CD8-positive, alpha-beta T cell (primary cell): ENCODE measurements at regions of chr14 and their contacts with region 1.

Region 1: DNA sequence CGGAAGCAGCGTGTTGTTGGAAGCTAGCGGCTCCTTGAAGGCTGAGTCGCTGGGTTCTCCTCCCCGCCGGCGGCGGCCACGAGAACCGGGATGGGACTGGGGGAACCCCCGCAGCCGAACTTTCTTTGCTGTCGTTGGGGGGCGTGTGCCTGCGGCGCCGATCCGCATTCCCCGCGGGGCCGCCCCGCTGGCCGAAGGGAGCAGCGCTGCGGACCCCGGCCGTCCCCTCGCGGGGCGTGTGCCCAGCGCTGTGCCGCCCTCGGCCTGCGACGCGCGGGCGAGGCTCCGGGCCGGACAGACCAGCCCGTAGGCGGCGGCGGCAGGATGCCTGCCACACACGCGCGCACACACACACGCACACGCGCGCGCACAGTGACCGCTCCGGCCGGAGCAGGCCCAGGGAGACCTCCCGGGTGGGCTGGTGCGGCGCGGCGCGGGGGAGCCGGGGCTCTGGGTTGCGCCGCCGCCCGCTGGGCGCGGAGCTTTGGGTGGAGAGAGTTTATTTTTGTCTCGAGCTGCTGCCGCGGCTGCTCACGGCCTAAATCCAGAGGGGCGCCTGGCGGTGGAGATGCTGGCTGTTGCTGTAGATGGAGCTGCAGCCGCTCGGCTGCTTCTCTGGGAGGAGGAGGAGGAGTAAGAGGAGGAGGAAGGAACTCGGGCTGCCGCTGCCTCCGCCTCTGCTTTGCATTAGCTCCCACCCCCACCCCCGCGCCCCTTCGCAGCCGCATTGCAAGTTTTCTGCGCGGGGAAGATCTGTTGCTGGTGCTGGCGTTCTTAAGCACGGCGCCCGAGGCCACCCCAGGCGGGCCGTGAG is at the start of gene SAMD4A:
- DNase-seq: peak; percentile 19 to 72 (median 57)
- ATAC-seq: peak; percentile 36
- H3K4me3 ChIP-seq: peak within 1 kb of the TSS; percentile 67 to 84
- H3K4me3 Mint-ChIP-seq: peak within 1 kb of the TSS; percentile 93
- H3K27ac ChIP-seq: peak within 1 kb of the TSS in 1 of 2 experiments; percentile 12
- H3K27ac Mint-ChIP-seq: peak within 1 kb of the TSS; percentile 83
- H3K4me1 ChIP-seq: peaks cover 15% of the 10 kb centered on the region
- H3K4me1 Mint-ChIP-seq: peaks cover 21% of the 10 kb centered on the region
- H3K27me3 ChIP-seq: peaks cover 0 to 3% of the 10 kb centered on the region in 2 experiments
- H3K27me3 Mint-ChIP-seq: peaks cover 15% of the 10 kb centered on the region
- CTCF ChIP-seq: no peak
- total RNA-seq, gene SAMD4A: 1.6 to 2.0 TPM

Region 2: DNA sequence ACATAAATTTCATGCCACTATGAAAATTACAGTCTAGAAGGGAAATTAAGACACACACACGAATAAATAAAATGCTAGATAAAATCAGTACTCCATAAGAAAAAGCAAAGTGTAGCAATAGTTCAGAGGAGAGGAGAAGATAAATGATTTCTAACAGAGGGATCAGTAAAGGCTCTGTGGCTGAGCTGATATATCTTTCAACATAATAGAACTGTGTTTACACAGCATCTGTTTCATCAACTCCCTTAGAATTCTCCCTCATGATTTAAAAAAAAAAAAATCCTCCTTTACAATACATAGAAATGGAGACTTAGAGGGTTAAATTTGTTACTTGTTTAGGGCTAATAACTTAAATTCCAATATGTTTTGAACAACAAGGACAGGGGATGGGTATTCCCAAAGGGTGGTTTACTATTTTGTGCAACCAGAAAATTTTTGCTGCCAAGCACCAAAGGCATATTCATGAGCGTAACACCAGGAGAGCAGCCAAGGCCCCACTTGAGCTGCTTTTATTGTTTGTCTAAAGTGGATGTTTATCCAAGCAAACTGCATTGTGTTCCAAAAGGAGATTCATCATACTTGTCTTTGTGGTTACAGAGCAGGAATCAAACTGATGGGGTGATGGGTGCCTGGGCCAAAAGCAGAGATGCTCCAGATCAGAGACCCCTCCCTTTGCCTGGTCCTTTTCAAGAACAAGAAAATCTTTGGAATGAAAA is 772.7 kb before region 1 on chr14:
- CTCF ChIA-PET with region 1: no interaction called
- POLR2A ChIA-PET with region 1: no interaction called
- intact Hi-C with region 1: no loop called
- DNase-seq: no peak
- ATAC-seq: no peak
- H3K4me3 ChIP-seq: no peak overlapping the region
- H3K4me3 Mint-ChIP-seq: no peak overlapping the region
- H3K27ac ChIP-seq: no peak overlapping the region
- H3K27ac Mint-ChIP-seq: no peak overlapping the region
- H3K4me1 ChIP-seq: no peaks in the 10 kb centered on the region
- H3K4me1 Mint-ChIP-seq: no peaks in the 10 kb centered on the region
- H3K27me3 ChIP-seq: no peaks in the 10 kb centered on the region
- H3K27me3 Mint-ChIP-seq: no peaks in the 10 kb centered on the region
- CTCF ChIP-seq: no peak

Region 3: DNA sequence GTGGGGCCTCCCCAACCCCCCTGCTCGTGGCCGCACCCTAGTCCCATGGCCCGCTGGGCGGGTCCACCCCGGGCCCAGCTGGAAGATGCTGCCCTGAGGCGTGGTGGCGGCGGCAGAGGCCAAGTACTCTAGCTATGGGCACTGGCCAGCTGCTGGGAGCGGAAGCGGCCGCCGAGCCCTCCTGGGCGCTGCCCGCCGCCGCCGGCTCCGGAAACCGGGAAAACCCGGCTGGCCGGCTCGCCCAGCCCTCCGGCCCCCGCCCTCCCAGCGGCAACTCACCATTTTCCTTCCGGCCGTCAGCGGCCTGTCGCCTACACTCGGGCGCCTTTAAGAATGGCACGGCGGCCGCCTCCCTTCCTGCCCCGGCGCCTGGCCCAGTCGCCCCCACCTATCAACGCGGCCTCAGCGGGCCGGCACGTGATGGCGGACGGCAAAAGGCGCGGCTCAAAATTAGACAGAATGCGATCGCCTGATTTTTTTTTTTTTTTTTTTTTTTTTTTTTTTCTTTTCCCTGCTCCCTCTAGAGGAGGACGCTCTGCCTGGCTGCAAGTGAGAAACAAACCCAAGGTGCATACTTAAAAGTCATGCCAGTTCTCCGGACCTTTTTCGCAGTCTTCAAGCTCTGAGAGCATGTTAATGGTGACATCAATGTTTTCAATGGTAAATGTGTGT is 77.8 kb before region 1 on chr14 and contains the start of gene GMFB:
- CTCF ChIA-PET with region 1: interaction called, 5 read pairs
- POLR2A ChIA-PET with region 1: no interaction called
- intact Hi-C with region 1: loop called in 1 of 2 experiments (anchors 2 kb)
- DNase-seq: peak; percentile 77 to 94 (median 89)
- ATAC-seq: peak; percentile 96
- H3K4me3 ChIP-seq: peak within 1 kb of the TSS; percentile 73 to 92
- H3K4me3 Mint-ChIP-seq: peak within 1 kb of the TSS; percentile 90
- H3K27ac ChIP-seq: peak within 1 kb of the TSS; percentile 66 to 89
- H3K27ac Mint-ChIP-seq: peak within 1 kb of the TSS; percentile 94
- H3K4me1 ChIP-seq: peaks cover 38% of the 10 kb centered on the region
- H3K4me1 Mint-ChIP-seq: peaks cover 61% of the 10 kb centered on the region
- H3K27me3 ChIP-seq: no peaks in the 10 kb centered on the region
- H3K27me3 Mint-ChIP-seq: no peaks in the 10 kb centered on the region
- CTCF ChIP-seq: peak; percentile 17
- total RNA-seq, gene GMFB: 33.7 to 34.0 TPM

Region 4: GRCh38 chr14:54642801-54643697 is 76.4 kb after region 1 on chr14:
- CTCF ChIA-PET with region 1: interaction called, 22 read pairs
- POLR2A ChIA-PET with region 1: no interaction called
- intact Hi-C with region 1: loop called (anchors 1 kb)
- DNase-seq: peak in 3 of 9 experiments; percentile 8 to 52 (median 38)
- ATAC-seq: no peak
- H3K4me3 ChIP-seq: no peak overlapping the region
- H3K4me3 Mint-ChIP-seq: no peak overlapping the region
- H3K27ac ChIP-seq: no peak overlapping the region
- H3K27ac Mint-ChIP-seq: no peak overlapping the region
- H3K4me1 ChIP-seq: no peaks in the 10 kb centered on the region
- H3K4me1 Mint-ChIP-seq: no peaks in the 10 kb centered on the region
- H3K27me3 ChIP-seq: no peaks in the 10 kb centered on the region
- H3K27me3 Mint-ChIP-seq: no peaks in the 10 kb centered on the region
- CTCF ChIP-seq: no peak

Region 5: GRCh38 chr14:54773171-54773975 is 206.8 kb after region 1 on chr14:
- CTCF ChIA-PET with region 1: interaction called, 169 read pairs
- POLR2A ChIA-PET with region 1: interaction called, 9 read pairs
- intact Hi-C with region 1: loop called (anchors 1 kb)
- DNase-seq: peak; percentile 16 to 80 (median 52)
- ATAC-seq: peak; percentile 69
- H3K4me3 ChIP-seq: no peak overlapping the region
- H3K4me3 Mint-ChIP-seq: peak overlapping the region; percentile 6
- H3K27ac ChIP-seq: no peak overlapping the region
- H3K27ac Mint-ChIP-seq: no peak overlapping the region
- H3K4me1 ChIP-seq: peaks cover 24% of the 10 kb centered on the region
- H3K4me1 Mint-ChIP-seq: peaks cover 24% of the 10 kb centered on the region
- H3K27me3 ChIP-seq: peaks cover 0 to 13% of the 10 kb centered on the region in 2 experiments
- H3K27me3 Mint-ChIP-seq: peaks cover 24% of the 10 kb centered on the region
- CTCF ChIP-seq: no peak

Region 6: GRCh38 chr14:54981698-54982097 is 415.1 kb after region 1 on chr14:
- CTCF ChIA-PET with region 1: no interaction called
- POLR2A ChIA-PET with region 1: no interaction called
- intact Hi-C with region 1: loop called in 1 of 2 experiments (anchors 5 kb)
- DNase-seq: peak in 1 of 9 experiments; percentile 5
- ATAC-seq: no peak
- H3K4me3 ChIP-seq: no peak overlapping the region
- H3K4me3 Mint-ChIP-seq: no peak overlapping the region
- H3K27ac ChIP-seq: no peak overlapping the region
- H3K27ac Mint-ChIP-seq: no peak overlapping the region
- H3K4me1 ChIP-seq: no peaks in the 10 kb centered on the region
- H3K4me1 Mint-ChIP-seq: no peaks in the 10 kb centered on the region
- H3K27me3 ChIP-seq: no peaks in the 10 kb centered on the region
- H3K27me3 Mint-ChIP-seq: no peaks in the 10 kb centered on the region
- CTCF ChIP-seq: peak; percentile 30

Region 7: DNA sequence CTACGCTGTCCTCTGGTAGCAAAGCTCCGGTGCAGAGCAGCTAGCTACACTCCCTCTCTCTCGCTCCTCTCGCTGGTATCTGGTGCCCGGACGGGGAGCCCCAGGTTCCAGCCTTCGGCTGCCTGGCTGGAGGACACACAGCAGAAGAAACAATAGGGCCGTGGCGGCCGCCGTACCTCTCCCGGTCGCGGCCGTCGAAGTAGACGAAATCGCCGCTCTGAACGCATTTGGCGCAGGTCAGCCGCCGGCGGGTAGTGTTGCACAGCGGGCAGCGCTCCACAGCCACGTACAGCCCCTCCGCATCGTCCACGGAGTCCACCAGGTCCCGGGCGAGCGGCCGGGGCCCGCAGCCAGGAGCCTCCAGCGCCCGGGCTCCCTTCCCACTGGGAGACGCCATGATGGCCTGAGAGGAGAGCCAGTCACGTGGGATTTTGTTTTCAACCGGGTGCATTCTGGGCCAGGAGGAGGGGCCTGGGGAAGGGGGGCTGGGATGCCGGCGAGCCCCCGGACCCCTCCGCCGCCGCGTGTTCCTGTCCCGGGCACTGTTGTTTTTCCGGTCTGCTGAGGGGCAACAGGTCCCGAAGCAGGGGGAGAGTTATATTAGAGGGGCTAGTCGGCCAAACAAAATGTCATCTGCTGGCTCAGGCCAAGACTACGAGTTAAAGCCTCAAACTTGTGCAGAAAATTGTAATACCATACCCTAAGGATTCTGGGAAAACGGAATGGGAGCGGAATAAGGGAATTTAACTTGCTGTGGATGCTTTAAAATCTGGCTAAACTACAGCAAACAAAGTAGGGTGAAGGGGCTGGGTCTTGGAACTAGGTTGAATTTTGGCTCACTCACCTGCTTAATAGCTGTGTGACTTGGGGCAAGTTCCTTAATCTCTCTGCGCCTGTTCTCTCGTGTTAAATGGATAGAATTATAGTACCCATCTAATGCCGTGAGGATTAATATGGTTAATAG is 845.1 kb after region 1 on chr14 and contains the start of gene ATG14:
- CTCF ChIA-PET with region 1: no interaction called
- POLR2A ChIA-PET with region 1: no interaction called
- intact Hi-C with region 1: loop called in 1 of 2 experiments (anchors 5 kb)
- DNase-seq: peak; percentile 50 to 84 (median 68)
- ATAC-seq: peak; percentile 95
- H3K4me3 ChIP-seq: peak within 1 kb of the TSS; percentile 89 to 90
- H3K4me3 Mint-ChIP-seq: peak within 1 kb of the TSS; percentile 90
- H3K27ac ChIP-seq: peak within 1 kb of the TSS; percentile 54 to 67
- H3K27ac Mint-ChIP-seq: peak within 1 kb of the TSS; percentile 88
- H3K4me1 ChIP-seq: peaks cover 23% of the 10 kb centered on the region
- H3K4me1 Mint-ChIP-seq: peaks cover 44% of the 10 kb centered on the region
- H3K27me3 ChIP-seq: no peaks in the 10 kb centered on the region
- H3K27me3 Mint-ChIP-seq: no peaks in the 10 kb centered on the region
- CTCF ChIP-seq: no peak
- total RNA-seq, gene ATG14: 30.9 to 32.7 TPM